Activated CD4-positive, alpha-beta T cell treated with anti-CD3 and anti-CD28 coated beads for 36 hours (primary cell): ENCODE measurements at regions of chr18 and their contacts with region 1.

Region 1: DNA sequence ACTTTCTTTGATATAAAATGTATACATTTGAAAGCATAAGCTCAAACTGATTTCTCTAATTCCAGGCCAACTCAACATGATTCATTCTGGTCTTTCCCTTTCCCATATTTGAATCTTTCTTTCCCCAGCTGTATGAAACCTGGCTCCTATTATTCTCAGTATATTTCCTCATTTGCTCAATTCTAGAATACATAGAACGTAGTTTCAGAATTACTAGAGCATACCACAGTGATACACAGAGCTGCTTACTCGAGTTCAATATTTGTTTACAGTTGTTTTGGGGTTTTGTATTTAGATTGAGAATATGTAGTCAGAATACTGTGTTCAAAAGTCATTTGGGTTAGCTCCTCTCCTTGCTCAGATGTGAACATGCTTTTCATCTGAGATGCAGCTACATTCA is 43.0 kb downstream of the TNFRSF11A start:
- DNase-seq: no peak
- ATAC-seq: peak; percentile 65
- H3K4me3 Mint-ChIP-seq: no peak overlapping the region
- H3K27ac Mint-ChIP-seq: no peak overlapping the region
- H3K4me1 Mint-ChIP-seq: peaks cover 28% of the 10 kb centered on the region
- H3K27me3 Mint-ChIP-seq: peaks cover 3% of the 10 kb centered on the region

Region 2: DNA sequence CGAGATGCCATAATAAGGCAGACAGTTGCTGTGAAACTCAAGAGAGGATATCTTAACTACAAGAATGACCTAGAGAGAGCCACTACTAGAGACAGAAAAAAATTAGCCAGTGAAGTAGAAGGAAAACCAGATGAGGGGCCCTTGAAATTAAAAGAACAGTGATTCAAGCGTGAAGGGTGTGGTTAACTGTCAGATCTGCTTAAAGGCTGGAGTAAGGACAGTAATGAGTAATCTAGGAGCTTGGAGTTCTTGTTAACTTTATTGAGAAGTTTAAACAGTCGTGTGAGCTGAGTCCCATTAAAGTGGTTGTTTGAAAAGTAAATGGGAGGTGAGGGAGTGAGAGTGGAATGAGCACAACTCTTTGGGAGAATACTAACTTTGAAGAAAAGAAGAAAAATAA is 202.5 kb before region 1 on chr18:
- CTCF ChIA-PET with region 1: no interaction called
- POLR2A ChIA-PET with region 1: no interaction called
- intact Hi-C with region 1: no loop called
- DNase-seq: no peak
- ATAC-seq: no peak
- H3K4me3 Mint-ChIP-seq: no peak overlapping the region
- H3K27ac Mint-ChIP-seq: no peak overlapping the region
- H3K4me1 Mint-ChIP-seq: peaks cover 12% of the 10 kb centered on the region
- H3K27me3 Mint-ChIP-seq: no peaks in the 10 kb centered on the region

Region 3: GRCh38 chr18:62324917-62325805 is 42.9 kb before region 1 on chr18 and contains the start of gene TNFRSF11A:
- CTCF ChIA-PET with region 1: interaction called, 3 read pairs
- POLR2A ChIA-PET with region 1: no interaction called
- intact Hi-C with region 1: loop called in 1 of 2 experiments (anchors 5 kb)
- DNase-seq: peak; percentile 85
- ATAC-seq: peak; percentile 77
- H3K4me3 Mint-ChIP-seq: peak within 1 kb of the TSS; percentile 78
- H3K27ac Mint-ChIP-seq: peak within 1 kb of the TSS; percentile 64
- H3K4me1 Mint-ChIP-seq: peaks cover 29% of the 10 kb centered on the region
- H3K27me3 Mint-ChIP-seq: peaks cover 70% of the 10 kb centered on the region
- total RNA-seq, gene TNFRSF11A: 6.9 to 9.3 TPM

Region 4: GRCh38 chr18:62399781-62400308 is 31.7 kb after region 1 on chr18:
- CTCF ChIA-PET with region 1: no interaction called
- POLR2A ChIA-PET with region 1: no interaction called
- intact Hi-C with region 1: loop called in 1 of 2 experiments (anchors 1 kb)
- DNase-seq: peak; percentile 11
- ATAC-seq: peak; percentile 21
- H3K4me3 Mint-ChIP-seq: no peak overlapping the region
- H3K27ac Mint-ChIP-seq: no peak overlapping the region
- H3K4me1 Mint-ChIP-seq: peaks cover 32% of the 10 kb centered on the region
- H3K27me3 Mint-ChIP-seq: peaks cover 4% of the 10 kb centered on the region

Region 5: DNA sequence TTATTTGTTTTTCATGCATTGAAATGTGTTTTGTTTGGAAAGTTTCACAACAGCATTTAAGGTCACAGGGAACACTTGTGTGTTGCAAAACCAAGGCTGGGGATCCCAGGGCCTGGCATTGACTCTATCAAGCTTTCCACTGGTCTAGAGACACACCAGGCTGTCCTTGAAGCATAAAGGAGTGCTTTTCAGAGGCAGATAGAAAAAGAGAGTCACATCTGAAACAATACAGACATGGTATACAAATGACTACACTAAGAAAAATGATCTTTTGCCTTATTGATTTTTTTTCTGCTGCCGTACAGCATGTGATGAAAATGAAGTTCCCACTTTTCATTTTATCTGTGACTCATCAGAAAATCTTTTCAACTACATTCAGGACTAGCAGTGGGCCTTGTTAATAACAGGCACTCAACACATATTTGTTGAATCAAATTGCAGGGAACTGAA is 92.8 kb after region 1 on chr18:
- CTCF ChIA-PET with region 1: no interaction called
- POLR2A ChIA-PET with region 1: no interaction called
- intact Hi-C with region 1: no loop called
- DNase-seq: no peak
- ATAC-seq: no peak
- H3K4me3 Mint-ChIP-seq: no peak overlapping the region
- H3K27ac Mint-ChIP-seq: no peak overlapping the region
- H3K4me1 Mint-ChIP-seq: no peaks in the 10 kb centered on the region
- H3K27me3 Mint-ChIP-seq: peaks cover 2% of the 10 kb centered on the region

Region 6: GRCh38 chr18:62763101-62763521 is 395.0 kb after region 1 on chr18:
- CTCF ChIA-PET with region 1: no interaction called
- POLR2A ChIA-PET with region 1: no interaction called
- intact Hi-C with region 1: no loop called
- DNase-seq: no peak
- ATAC-seq: no peak
- H3K4me3 Mint-ChIP-seq: no peak overlapping the region
- H3K27ac Mint-ChIP-seq: no peak overlapping the region
- H3K4me1 Mint-ChIP-seq: peaks cover 11% of the 10 kb centered on the region
- H3K27me3 Mint-ChIP-seq: no peaks in the 10 kb centered on the region